AG04449 (cell line): ENCODE measurements at regions of chr5 and their contacts with region 1.

Region 1: DNA sequence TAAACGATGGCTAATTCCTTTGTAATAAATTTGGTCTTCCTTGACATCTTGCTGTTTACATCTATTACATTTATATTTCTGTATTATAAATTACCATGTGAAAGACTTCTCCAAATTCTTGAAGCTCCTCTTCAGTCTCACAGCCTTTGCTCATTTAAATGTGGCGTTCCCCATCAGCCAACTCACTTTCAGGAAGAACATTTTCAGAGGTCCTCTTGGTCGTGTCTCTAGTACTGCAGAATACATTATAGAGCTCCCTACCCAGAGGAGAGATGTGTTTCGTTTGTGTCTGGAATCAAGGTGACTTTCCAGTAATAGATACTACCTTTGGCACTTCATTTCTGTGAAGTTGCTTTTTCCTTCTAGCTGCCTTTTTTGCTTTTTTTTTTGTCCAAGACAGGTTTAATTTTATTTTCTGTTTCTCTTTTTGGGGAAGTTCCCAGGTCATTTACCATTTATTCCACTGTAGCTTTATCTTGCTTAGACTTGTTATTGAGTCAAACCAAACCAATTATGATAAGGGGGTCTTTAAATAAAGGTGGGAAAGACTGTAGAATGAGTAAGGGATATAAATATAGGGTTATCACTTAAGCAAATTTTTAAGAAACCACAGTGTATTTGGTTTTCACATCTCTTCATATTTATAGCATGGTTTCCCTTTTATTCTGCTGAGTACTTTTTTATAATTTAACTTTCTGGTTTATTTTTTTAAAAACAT is 12.8 kb downstream of the UBE2B start:
- DNase-seq: no peak
- H3K4me3 ChIP-seq: no peak overlapping the region
- CTCF ChIP-seq: no peak

Region 2: DNA sequence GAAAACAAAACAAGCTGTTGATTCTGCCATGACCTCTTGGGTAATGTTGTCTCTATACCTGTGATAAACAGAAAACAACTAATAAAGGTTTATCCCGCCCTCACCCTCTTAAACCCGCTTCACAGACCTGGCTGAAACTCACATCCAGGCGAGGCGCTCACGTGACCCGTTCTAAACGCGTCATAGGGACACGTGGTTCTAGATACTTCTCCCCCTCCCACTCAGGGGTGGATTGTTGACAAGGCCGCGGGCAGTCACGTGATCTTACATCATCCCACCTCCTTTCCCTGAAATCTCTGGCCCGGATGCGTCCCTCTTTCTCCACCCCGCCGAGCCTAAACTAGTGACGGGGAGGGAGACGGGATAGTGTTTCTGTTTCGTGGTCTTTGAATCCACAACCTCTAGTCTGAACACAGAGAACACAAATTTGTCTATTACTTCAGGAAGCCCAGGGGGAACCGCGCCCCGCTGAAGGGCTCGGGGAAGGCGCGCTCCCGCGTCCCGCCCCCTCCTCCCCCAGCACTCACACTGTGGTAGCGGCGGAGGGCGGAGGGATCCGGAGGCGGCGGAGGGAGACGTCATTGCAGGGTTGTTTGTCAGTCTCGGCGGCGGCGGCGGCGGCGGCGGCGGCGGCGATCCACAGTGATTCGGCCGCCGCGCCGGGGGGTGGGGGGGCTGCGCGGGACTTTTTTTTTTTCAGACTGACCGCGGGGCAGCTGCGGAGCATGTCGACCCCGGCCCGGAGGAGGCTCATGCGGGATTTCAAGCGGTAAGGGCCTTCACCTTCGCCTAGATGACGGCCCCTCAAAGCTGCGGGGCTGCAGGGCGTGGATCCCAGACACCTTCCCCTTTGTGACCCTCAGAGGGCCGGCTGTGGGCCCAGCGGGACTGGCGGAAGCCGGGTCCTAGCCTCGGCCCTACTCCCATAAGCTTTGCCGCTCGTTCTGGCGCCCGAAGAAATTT is 13.0 kb before region 1 on chr5 and contains the start of gene UBE2B:
- CTCF ChIA-PET with region 1: interaction called, 10 read pairs
- POLR2A ChIA-PET with region 1: no interaction called
- DNase-seq: peak; percentile 99
- H3K4me3 ChIP-seq: peak within 1 kb of the TSS; percentile 99
- CTCF ChIP-seq: no peak